BJ (cell line): ENCODE measurements at regions of chr10 and their contacts with region 1.

Region 1: DNA sequence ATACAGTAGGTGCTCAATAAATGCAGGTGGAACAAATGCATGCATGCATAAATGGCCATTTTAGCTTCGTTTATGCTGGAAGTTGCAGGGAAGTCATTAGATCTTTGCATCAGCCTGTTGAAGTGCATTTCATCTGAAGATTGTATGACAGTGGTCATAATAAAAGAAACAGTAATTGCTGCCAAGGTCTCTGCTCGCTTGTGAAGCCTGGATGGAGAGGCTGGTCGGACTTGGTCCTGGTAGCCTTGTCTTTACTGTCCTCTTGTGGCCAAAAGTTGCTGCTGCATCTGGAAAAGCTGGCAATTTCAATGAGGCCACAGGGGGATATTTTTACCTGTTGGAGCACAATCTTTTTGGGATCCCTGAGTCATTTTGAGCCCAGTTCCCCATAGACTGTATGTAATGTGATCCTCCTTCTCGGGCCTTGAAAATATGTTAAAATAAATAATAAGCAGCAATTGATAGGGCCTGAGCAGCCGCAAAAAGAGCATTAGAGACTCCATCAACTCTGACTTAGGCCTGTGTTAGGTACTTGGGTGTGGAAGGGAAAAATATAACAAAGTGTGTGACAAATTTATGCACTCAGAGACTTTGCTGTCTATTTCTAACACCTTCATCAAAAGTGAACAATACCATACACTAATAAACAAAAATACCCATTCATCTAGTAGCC is 31.6 kb upstream of the HABP2 start:
- DNase-seq: no peak
- H3K4me3 ChIP-seq: no peak overlapping the region
- H3K27me3 ChIP-seq: no peaks in the 10 kb centered on the region; the same call in 1 of the 2 replicates
- CTCF ChIP-seq: peak; percentile 99

Region 2: GRCh38 chr10:113273181-113274163 is 247.8 kb before region 1 on chr10:
- CTCF ChIA-PET with region 1: no interaction called
- POLR2A ChIA-PET with region 1: no interaction called
- DNase-seq: no peak
- H3K4me3 ChIP-seq: no peak overlapping the region
- H3K27me3 ChIP-seq: no peaks in the 10 kb centered on the region
- CTCF ChIP-seq: no peak

Region 3: GRCh38 chr10:113441220-113441619 is 80.0 kb before region 1 on chr10:
- CTCF ChIA-PET with region 1: interaction called, 45 read pairs
- POLR2A ChIA-PET with region 1: interaction called, 7 read pairs
- DNase-seq: no peak
- H3K4me3 ChIP-seq: no peak overlapping the region
- H3K27me3 ChIP-seq: peaks cover 6% of the 10 kb centered on the region
- CTCF ChIP-seq: no peak; the same call in 1 of the 2 replicates

Region 4: DNA sequence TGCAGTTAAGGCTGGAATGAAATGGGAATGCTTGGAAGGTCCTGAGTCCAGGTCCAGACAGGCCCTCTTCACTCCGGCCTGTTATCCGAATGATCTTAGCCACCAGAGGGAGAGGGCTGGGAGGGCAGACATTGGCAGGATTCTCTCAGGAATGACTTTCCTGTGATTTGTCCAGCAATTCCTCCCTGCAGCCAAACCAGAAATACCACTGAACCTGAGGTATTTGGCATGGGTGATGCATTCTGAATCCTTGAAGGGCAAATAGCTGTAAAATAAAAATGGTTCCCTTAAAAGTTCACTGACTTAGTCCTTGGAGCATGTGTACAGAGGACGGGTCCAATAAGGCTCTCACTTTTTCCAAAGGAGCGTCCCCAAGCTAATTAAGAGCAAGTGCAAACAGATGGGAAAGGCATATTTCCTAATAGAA is 45.9 kb before region 1 on chr10:
- CTCF ChIA-PET with region 1: interaction called, 22 read pairs
- POLR2A ChIA-PET with region 1: interaction called, 6 read pairs
- DNase-seq: peak; percentile 98
- H3K4me3 ChIP-seq: no peak overlapping the region
- H3K27me3 ChIP-seq: 0 out of 2 replicates have a peak, but pooled peaks cover 2% of the 10 kb centered on the region
- CTCF ChIP-seq: peak; percentile 64

Region 5: GRCh38 chr10:114043532-114044246 is 522.4 kb after region 1 on chr10 and contains the start of gene ADRB1:
- CTCF ChIA-PET with region 1: no interaction called
- POLR2A ChIA-PET with region 1: no interaction called
- DNase-seq: no peak
- H3K4me3 ChIP-seq: peak within 1 kb of the TSS; percentile 47
- H3K27me3 ChIP-seq: peaks cover 31% of the 10 kb centered on the region
- CTCF ChIP-seq: no peak
- polyA plus RNA-seq, gene ADRB1: not detected in 2 replicates